ENCODE measurements at regions of chr19 and their contacts with region 1.

Region 1: DNA sequence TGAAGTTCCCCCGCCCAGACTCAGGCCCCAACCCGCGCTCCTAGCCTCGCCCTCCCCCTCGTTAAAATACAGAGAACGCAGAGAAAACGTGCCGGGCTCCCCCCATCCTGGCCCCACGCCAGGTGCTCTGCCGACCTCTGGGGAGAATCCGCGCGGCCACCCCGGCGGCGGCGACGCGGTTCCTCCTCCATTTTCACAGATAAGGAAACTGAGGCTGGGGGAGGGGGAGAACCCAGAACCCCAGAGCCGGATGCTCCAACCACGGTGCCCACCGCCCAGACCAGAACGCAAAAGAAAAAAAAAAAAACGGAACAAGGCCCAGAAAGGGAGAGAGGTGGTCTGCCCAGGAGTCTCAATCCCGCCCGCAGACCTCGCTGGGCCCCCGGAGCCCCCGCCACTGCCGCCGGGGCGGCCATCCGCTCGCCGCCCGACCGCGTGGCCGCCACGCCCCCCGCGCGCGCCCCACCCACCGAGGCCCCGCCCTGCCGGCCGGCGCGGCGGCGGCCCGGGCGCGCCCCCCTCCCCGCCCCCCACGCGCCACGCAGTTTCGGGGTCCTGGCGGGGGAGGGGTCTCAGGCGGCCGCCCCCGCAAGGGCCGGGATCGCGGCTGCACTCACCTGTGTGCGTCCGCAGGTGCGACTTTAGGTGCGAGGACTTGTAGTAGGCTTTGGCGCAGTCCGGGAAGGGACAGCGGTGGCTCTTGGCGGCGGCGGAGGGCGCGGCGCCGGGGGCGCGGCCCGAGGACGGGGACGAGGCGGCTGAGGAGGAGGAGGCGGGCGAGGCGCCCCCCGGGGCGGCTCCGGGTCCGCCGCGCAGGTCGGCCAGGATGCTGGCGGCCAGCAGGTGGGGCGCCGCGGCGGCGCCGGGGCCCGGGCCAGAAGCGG is 713 bp downstream of the KLF16 start:
- DNase-seq: no peak
- H3K4me3 ChIP-seq: peak overlapping the region; percentile 72 to 94 (median 80)
- H3K27ac ChIP-seq: peak overlapping the region; percentile 68 to 89 (median 76)
- H3K4me1 ChIP-seq: peaks cover 41 to 68% (median 61%) of the 10 kb centered on the region in 4 donors
- H3K27me3 ChIP-seq: peaks cover 0 to 46% (median 5%) of the 10 kb centered on the region in 4 donors
- CTCF ChIP-seq: no peak
- EP300 ChIP-seq: no peak
- POLR2A ChIP-seq: no peak

Region 2: GRCh38 chr19:1848399-1849131 is 14.1 kb before region 1 on chr19 and contains the start of gene REXO1:
- intact Hi-C with region 1: loop called (anchors 1 kb)
- DNase-seq: peak; percentile 98
- H3K4me3 ChIP-seq: peak within 1 kb of the TSS; percentile 100
- H3K27ac ChIP-seq: peak within 1 kb of the TSS; percentile 97 to 99 (median 99)
- H3K4me1 ChIP-seq: peaks cover 51 to 74% (median 62%) of the 10 kb centered on the region in 4 donors
- H3K27me3 ChIP-seq: peaks cover 0 to 25% (median 0%) of the 10 kb centered on the region in 4 donors
- CTCF ChIP-seq: peak; percentile 95 to 96 (median 96)
- EP300 ChIP-seq: no peak
- POLR2A ChIP-seq: no peak
- total RNA-seq, gene REXO1: 16.2 to 36.0 (median 26.1) TPM